A549 (cell line): ENCODE measurements at regions of chr5 and their contacts with region 1.

Region 1: GRCh38 chr5:95664204-95664786 is 17.7 kb downstream of the RFESD start:
- DNase-seq: no peak
- ATAC-seq: no peak
- H3K4me3 ChIP-seq: no peak overlapping the region
- H3K27ac ChIP-seq: peak overlapping the region in 1 of 2 experiments; percentile 18; a peak in 1 of 6 replicates
- H3K4me1 ChIP-seq: peaks cover 3% of the 10 kb centered on the region; the same call in 1 of the 3 replicates
- CTCF ChIP-seq: peak; percentile 88
- EP300 ChIP-seq: no peak
- POLR2A ChIP-seq: no peak
- RAD21 ChIP-seq: peak; percentile 70 to 76

Region 2: DNA sequence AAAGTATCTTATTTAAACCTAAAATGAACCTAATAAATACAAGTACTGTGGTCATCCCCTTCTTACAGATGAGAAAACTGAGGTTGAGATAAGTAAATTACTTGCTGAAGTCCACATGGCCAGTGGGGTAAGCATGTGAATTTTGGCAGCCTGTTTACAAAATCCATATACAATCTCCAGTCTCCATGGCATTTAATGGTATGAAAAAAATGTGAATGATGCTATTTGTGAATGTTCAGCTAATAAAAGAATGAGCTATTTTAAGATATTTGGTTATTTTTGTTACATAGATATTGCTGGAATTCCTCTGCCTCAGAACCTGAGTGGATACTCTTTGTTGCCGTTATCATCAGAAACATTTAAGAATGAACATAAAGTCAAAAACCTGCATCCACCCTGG is 63.7 kb before region 1 on chr5:
- CTCF ChIA-PET with region 1: no interaction called
- POLR2A ChIA-PET with region 1: no interaction called
- DNase-seq: no peak
- ATAC-seq: no peak
- H3K4me3 ChIP-seq: no peak overlapping the region
- H3K27ac ChIP-seq: no peak overlapping the region
- H3K4me1 ChIP-seq: no peaks in the 10 kb centered on the region
- CTCF ChIP-seq: no peak
- EP300 ChIP-seq: no peak
- POLR2A ChIP-seq: no peak
- RAD21 ChIP-seq: no peak

Region 3: GRCh38 chr5:95697781-95698681 is 33.7 kb after region 1 on chr5:
- CTCF ChIA-PET with region 1: interaction called, 10 read pairs
- POLR2A ChIA-PET with region 1: no interaction called
- DNase-seq: peak in 1 of 2 experiments; percentile 6
- ATAC-seq: peak; percentile 43 to 75; a peak in 4 of 6 replicates
- H3K4me3 ChIP-seq: no peak overlapping the region
- H3K27ac ChIP-seq: peak overlapping the region in 1 of 2 experiments; percentile 35; a peak in 1 of 6 replicates
- H3K4me1 ChIP-seq: peaks cover 13% of the 10 kb centered on the region
- CTCF ChIP-seq: no peak
- EP300 ChIP-seq: no peak
- POLR2A ChIP-seq: no peak
- RAD21 ChIP-seq: no peak

Region 4: DNA sequence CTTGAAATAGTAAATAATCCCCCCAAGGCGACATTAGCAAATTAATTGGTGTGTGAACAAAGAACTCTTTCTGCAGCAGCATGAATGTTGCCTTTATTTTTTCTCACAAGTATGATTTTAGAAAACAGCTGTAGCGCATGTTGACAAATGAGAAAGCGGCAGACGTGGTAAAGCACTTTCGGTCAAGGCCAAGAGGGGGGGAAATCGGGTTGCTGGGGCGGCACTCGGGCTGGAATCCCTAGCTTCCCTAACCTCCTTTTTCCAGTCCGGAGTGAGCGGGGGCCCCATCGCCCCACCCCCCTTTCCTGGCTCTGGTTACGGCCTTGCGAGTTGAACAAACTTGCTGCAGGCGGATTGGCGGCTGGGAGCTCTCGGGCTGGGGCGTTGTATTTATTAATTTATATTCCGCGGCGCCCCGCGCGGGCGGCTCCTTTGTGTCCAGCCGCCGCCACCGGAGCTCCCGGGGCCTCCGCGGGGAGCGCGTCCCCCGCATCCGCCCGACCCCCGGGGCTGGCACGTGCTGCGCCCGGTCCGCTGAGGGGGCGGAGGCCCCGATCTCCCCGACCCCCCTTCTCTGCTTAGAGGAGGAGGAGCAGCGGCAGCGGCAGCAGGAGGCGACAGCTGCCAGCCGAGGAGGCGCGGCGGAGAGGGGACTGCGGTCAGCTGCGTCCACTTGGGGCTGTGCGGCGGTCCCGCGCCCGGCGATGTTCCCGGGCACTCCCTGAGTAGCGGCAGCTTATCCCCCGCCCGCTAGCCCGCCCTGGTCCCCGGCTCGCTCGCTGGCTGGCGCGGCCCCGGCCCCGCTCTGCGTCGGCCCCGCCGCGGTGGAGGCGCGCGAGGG is 66.7 kb after region 1 on chr5 and contains the start of gene RHOBTB3:
- CTCF ChIA-PET with region 1: interaction called, 17 read pairs
- POLR2A ChIA-PET with region 1: no interaction called
- DNase-seq: peak; percentile 49 to 66
- ATAC-seq: peak; percentile 86 to 89
- H3K4me3 ChIP-seq: peak within 1 kb of the TSS; percentile 77
- H3K27ac ChIP-seq: peak within 1 kb of the TSS; percentile 85 to 92
- H3K4me1 ChIP-seq: peaks cover 17% of the 10 kb centered on the region; the same call in 1 of the 3 replicates
- CTCF ChIP-seq: peak; percentile 12; the same call in 1 of the 3 replicates
- EP300 ChIP-seq: no peak
- POLR2A ChIP-seq: peak; percentile 58
- RAD21 ChIP-seq: peak in 1 of 2 experiments; percentile 20; a peak in 1 of 5 replicates
- polyA plus RNA-seq, gene RHOBTB3: 28.6 and 37.5 TPM in 2 replicates

Region 5: GRCh38 chr5:95773335-95774059 is 109.2 kb after region 1 on chr5:
- CTCF ChIA-PET with region 1: interaction called, 17 read pairs
- POLR2A ChIA-PET with region 1: no interaction called
- DNase-seq: peak in 1 of 2 experiments; percentile 20
- ATAC-seq: no peak; a peak in 1 of 6 replicates
- H3K4me3 ChIP-seq: no peak overlapping the region
- H3K27ac ChIP-seq: peak overlapping the region; percentile 61 to 75
- H3K4me1 ChIP-seq: peaks cover 14% of the 10 kb centered on the region
- CTCF ChIP-seq: no peak
- EP300 ChIP-seq: no peak
- POLR2A ChIP-seq: no peak
- RAD21 ChIP-seq: no peak

Region 6: GRCh38 chr5:97094579-97095317 is 1430.5 kb after region 1 on chr5:
- CTCF ChIA-PET with region 1: no interaction called
- POLR2A ChIA-PET with region 1: no interaction called
- DNase-seq: no peak
- ATAC-seq: no peak
- H3K4me3 ChIP-seq: no peak overlapping the region
- H3K27ac ChIP-seq: no peak overlapping the region
- H3K4me1 ChIP-seq: no peaks in the 10 kb centered on the region
- CTCF ChIP-seq: no peak
- EP300 ChIP-seq: no peak
- POLR2A ChIP-seq: no peak
- RAD21 ChIP-seq: no peak